ENCODE measurements at regions of chr13 and their contacts with region 1.

Region 1: DNA sequence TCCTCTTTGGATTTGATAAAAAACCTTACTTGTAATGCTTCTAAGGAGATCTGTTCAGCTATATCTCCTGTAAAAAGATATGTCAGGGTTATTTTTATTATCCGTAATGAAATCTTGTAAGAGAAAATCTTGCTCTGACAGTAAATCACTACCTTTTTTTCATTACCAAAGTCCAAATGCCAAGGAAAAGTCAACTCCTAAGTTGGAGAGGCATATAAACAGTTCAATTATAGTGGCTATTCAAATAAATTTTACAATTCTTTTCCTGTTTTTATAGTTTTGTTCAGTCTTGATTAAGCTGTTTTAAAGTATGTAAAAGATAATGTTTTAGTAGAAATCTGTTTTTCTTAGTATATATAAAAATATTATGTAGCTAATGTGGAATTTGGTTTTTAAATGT is 9.0 kb downstream of the KCTD4 start:
- DNase-seq: no peak
- ATAC-seq: no peak
- H3K4me3 ChIP-seq: no peak overlapping the region
- H3K27ac ChIP-seq: no peak overlapping the region
- H3K4me1 ChIP-seq: no peaks in the 10 kb centered on the region
- H3K27me3 ChIP-seq: no peaks in the 10 kb centered on the region
- CTCF ChIP-seq: no peak

Region 2: GRCh38 chr13:45167611-45168556 is 24.0 kb before region 1 on chr13:
- intact Hi-C with region 1: loop called in 1 of 2 experiments (anchors 2 kb)
- DNase-seq: no peak
- ATAC-seq: peak; percentile 57 to 91 (median 72)
- H3K4me3 ChIP-seq: no peak overlapping the region
- H3K27ac ChIP-seq: no peak overlapping the region
- H3K4me1 ChIP-seq: peaks cover 7% of the 10 kb centered on the region
- H3K27me3 ChIP-seq: no peaks in the 10 kb centered on the region
- CTCF ChIP-seq: no peak

Region 3: GRCh38 chr13:45249662-45250061 is 57.8 kb after region 1 on chr13:
- intact Hi-C with region 1: no loop called
- DNase-seq: no peak
- ATAC-seq: no peak
- H3K4me3 ChIP-seq: no peak overlapping the region
- H3K27ac ChIP-seq: no peak overlapping the region
- H3K4me1 ChIP-seq: no peaks in the 10 kb centered on the region
- H3K27me3 ChIP-seq: no peaks in the 10 kb centered on the region
- CTCF ChIP-seq: no peak

Region 4: GRCh38 chr13:46022481-46022880 is 830.6 kb after region 1 on chr13:
- intact Hi-C with region 1: no loop called
- DNase-seq: no peak
- ATAC-seq: no peak
- H3K4me3 ChIP-seq: no peak overlapping the region
- H3K27ac ChIP-seq: no peak overlapping the region
- H3K4me1 ChIP-seq: no peaks in the 10 kb centered on the region
- H3K27me3 ChIP-seq: no peaks in the 10 kb centered on the region
- CTCF ChIP-seq: no peak